Activated CD4-positive, alpha-beta memory T cell treated with anti-CD3 and anti-CD28 coated beads for 36 hours (primary cell): ENCODE measurements at regions of chr3 and their contacts with region 1.

Region 1: GRCh38 chr3:67790043-67790442 is 135.6 kb upstream of the SUCLG2 start:
- DNase-seq: peak; percentile 73
- H3K4me3 Mint-ChIP-seq: no peak overlapping the region
- H3K27ac Mint-ChIP-seq: no peak overlapping the region
- H3K4me1 Mint-ChIP-seq: peaks cover 5% of the 10 kb centered on the region
- H3K27me3 Mint-ChIP-seq: no peaks in the 10 kb centered on the region

Region 2: GRCh38 chr3:67384760-67385397 is 405.2 kb before region 1 on chr3:
- CTCF ChIA-PET with region 1: interaction called, 72 read pairs
- POLR2A ChIA-PET with region 1: no interaction called
- intact Hi-C with region 1: loop called (anchors 1 kb)
- DNase-seq: peak; percentile 61
- H3K4me3 Mint-ChIP-seq: no peak overlapping the region
- H3K27ac Mint-ChIP-seq: no peak overlapping the region
- H3K4me1 Mint-ChIP-seq: peaks cover 20% of the 10 kb centered on the region
- H3K27me3 Mint-ChIP-seq: no peaks in the 10 kb centered on the region

Region 3: DNA sequence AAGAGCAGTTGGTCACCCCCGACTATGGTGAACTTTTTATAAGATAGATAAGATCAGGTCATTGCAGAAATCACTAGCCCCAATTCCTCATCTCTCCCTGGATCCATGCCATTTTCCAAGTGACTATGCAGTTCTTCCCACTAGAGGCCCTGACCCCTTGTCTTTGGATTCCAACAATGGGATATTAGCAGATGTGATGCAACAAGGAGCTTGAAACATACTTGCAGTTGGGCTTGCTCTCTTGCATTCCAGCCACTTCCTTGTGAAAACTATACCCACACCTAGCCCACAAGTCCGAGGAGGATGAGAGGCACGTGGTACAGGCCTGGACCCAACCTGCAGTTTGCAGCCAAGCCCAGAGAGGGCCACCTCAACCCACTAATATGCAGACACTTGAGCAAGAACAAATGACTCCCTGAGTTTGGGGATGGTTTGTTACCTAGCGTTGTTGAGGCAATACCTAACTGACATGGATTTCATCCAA is 196.2 kb before region 1 on chr3:
- CTCF ChIA-PET with region 1: interaction called, 17 read pairs
- POLR2A ChIA-PET with region 1: no interaction called
- intact Hi-C with region 1: no loop called
- DNase-seq: peak; percentile 23
- H3K4me3 Mint-ChIP-seq: no peak overlapping the region
- H3K27ac Mint-ChIP-seq: no peak overlapping the region
- H3K4me1 Mint-ChIP-seq: peaks cover 28% of the 10 kb centered on the region
- H3K27me3 Mint-ChIP-seq: no peaks in the 10 kb centered on the region

Region 4: GRCh38 chr3:67662733-67663132 is 127.3 kb before region 1 on chr3:
- CTCF ChIA-PET with region 1: no interaction called
- POLR2A ChIA-PET with region 1: no interaction called
- intact Hi-C with region 1: loop called (anchors 2 kb)
- DNase-seq: no peak
- H3K4me3 Mint-ChIP-seq: no peak overlapping the region
- H3K27ac Mint-ChIP-seq: no peak overlapping the region
- H3K4me1 Mint-ChIP-seq: peaks cover 31% of the 10 kb centered on the region
- H3K27me3 Mint-ChIP-seq: no peaks in the 10 kb centered on the region